SK-N-SH (cell line): ENCODE measurements at regions of chr3 and their contacts with region 1.

Region 1: DNA sequence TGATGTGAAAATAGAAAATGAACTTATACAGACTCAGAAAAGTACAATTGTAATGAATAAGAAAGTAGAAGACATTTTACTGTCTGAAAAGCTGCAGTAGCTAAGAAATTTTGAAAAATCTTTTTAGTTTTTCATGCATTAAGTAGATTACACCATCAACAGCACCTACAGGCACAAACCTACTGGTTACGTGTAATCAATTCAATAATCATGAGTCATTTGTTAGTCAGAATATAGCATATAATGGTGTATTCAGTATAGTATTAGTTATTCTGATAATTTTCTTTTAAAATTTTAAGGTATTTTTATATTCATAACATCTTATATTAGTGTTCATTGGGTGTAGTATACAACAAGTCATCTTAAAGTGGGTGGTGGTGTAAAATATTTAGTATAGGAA is 550.5 kb upstream of the GBE1 start:
- DNase-seq: no peak
- H3K4me3 ChIP-seq: no peak overlapping the region
- H3K27ac ChIP-seq: no peak overlapping the region
- H3K4me1 ChIP-seq: no peaks in the 10 kb centered on the region
- H3K27me3 ChIP-seq: no peaks in the 10 kb centered on the region
- CTCF ChIP-seq: no peak
- EP300 ChIP-seq: no peak
- RAD21 ChIP-seq: no peak

Region 2: GRCh38 chr3:82329300-82329699 is 17.4 kb after region 1 on chr3:
- CTCF ChIA-PET with region 1: interaction called, 17 read pairs
- POLR2A ChIA-PET with region 1: no interaction called
- DNase-seq: no peak
- H3K4me3 ChIP-seq: no peak overlapping the region
- H3K27ac ChIP-seq: no peak overlapping the region
- H3K4me1 ChIP-seq: no peaks in the 10 kb centered on the region
- H3K27me3 ChIP-seq: no peaks in the 10 kb centered on the region
- CTCF ChIP-seq: peak; percentile 60
- EP300 ChIP-seq: no peak
- RAD21 ChIP-seq: peak; percentile 20; the same call in 1 of the 2 replicates